Mucosa of descending colon (tissue), 3 donors: ENCODE measurements at regions of chr9 and their contacts with region 1.

Region 1: DNA sequence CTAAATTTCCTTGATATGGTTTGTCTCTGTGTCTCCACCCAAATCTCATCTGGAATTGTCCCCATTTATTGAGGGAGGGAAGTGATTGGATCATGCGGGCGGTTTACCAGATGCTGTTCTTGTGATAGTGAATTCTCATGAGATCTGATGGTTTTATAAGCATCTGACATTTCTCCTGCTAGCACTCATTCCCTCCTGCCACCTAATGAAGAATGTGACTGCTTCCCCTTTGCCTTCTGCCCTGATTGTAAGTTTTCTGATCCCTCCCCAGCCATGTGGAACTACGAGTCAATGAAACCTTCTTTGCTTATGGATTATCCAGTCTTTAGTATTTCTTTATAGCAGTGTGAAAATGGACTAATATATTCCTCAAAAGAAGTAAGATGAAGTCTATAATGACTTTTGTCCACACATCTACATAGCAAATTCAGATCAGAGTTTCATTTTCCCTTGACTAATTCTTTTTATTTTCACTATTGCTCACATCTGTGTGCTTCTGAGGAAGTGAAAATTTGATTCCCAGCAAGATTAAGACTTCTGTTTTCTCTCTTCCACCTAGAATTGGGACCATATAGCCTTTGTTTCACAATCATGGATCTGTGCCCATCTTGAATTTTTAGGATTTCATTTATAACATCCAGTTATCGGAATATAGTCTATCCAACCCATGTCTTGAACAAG is 393.5 kb downstream of the DMAC1 start:
- DNase-seq: no peak
- ATAC-seq: no peak
- H3K4me3 ChIP-seq: no peak overlapping the region
- H3K4me1 ChIP-seq: no peaks in the 10 kb centered on the region
- CTCF ChIP-seq: no peak

Region 2: GRCh38 chr9:7186175-7186574 is 219.9 kb before region 1 on chr9:
- intact Hi-C with region 1: no loop called
- DNase-seq: peak in 1 of 3 donors; percentile 29
- ATAC-seq: peak; percentile 71
- H3K4me3 ChIP-seq: no peak overlapping the region
- H3K4me1 ChIP-seq: no peaks in the 10 kb centered on the region
- CTCF ChIP-seq: peak; percentile 48

Region 3: DNA sequence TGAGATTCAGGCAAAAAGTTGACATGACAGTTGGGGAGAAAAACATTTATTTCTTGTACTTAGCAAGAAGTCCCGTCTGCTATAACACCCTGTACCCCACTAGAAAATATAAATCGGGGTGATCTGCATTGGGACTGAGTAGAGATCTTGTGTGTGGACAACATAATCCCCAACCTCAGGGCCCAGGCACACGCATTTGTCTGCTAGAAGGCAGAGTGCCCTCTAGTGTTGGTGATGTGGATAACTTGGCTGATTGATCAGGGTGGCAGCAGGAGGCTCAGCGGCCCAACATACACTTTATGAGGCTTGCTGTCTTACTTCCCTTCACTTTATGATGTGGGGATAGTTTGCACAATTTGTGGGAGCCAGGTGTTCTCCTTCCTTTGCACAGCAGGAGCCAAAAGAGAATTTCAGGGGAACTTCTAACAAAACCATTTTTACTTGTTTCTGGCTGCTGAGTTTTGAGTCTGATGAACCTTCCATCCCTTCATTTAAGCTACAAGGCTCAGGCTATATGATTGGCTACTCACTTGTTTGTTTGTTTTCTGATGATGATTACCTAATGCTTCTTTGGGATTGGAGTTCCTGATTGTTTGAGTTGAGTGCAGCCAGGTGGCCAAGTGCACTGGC is 130.4 kb after region 1 on chr9:
- intact Hi-C with region 1: loop called in 1 of 2 experiments (anchors 5 kb)
- DNase-seq: peak; percentile 44 to 81 (median 47)
- ATAC-seq: peak; percentile 96
- H3K4me3 ChIP-seq: no peak overlapping the region
- H3K4me1 ChIP-seq: no peaks in the 10 kb centered on the region
- CTCF ChIP-seq: peak; percentile 37